Uterus (tissue), 4 donors: ENCODE measurements at regions of chr1 and their contacts with region 1.

Region 1: DNA sequence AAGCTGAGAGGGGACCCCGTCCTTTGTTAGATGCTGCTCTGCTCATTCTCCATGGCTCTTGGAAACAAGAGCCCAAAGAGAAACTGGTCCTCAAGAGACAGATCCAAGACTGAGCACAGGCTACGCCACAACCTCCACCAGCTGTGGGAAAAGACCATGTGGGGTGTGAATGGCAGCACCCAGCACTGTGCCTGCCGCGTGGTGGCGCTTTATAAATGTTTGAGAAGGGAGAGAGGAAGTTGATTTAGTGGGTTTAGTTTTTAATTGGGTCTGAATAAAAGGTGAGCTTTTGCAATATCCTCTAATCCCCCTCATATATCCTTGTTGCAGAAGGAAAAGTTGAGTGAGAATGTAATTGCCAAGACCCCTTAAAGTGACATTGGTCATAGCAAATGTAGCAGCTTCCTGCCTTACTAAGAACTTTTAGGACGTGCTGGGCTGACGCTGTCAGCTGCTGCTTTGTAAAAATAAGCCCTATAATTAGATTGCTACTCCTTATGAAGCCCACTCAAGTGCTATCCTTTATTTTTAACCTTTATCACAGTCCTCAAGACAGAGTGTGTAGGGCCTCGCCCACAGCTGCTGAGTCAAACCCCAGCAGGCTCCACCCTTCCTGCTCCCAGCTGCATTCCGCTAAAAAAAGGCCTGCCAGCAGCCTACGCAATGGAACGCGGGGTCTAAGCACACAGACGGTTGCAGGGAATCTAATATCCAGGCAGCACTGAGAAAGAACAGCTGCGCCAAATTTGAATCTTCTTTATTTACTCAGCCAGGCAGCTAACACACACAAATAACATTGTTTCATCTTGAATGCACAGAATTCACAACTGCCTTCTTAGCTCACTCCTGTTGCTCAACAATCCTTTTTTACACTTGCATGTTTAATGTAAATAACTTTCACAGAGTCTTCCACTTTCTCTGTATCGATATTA is 47.4 kb upstream of the PRDX6 start:
- DNase-seq: peak; percentile 89 to 92
- H3K4me3 ChIP-seq: peak overlapping the region; percentile 8 to 9
- H3K27ac ChIP-seq: peak overlapping the region; percentile 81 to 86
- H3K4me1 ChIP-seq: peaks cover 0 to 7% of the 10 kb centered on the region in 2 donors
- H3K27me3 ChIP-seq: no peaks in the 10 kb centered on the region
- CTCF ChIP-seq: peak; percentile 39 to 52 (median 48)
- POLR2A ChIP-seq: no peak

Region 2: DNA sequence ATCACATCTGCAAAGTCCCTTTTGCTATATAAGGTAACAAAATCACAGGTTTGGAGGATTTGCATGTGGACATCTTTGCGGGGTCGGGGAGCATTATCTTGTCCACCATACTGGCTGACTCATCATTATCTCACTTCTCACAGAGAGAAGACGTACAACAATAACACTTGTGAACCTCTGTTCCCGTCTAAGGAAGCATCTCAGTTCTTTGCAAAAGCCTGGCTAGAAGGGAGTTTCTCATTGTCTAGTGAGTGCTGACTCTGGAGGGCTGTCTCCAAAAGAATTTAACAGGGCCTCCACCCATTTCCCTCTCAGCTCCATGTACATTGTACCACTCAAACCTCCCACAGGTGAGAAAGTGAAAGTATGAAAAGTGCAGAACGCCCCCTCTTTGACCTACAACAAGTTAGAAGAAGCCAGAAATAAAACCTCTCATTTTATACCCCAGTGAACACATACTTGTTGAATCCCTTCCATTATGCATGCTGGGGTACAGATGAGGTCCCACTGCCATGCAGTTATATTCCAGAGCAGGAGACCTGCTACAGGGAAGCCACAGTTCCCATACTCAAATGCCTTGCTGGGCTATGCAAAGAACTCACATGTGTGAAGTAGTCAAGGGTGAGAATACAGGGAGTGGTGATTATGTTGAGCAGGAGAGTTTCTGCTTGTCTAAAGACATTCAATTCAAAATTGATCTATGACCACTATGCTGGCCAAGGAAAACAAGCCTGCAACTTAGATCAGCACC is 74.3 kb before region 1 on chr1:
- intact Hi-C with region 1: no loop called
- DNase-seq: no peak
- H3K4me3 ChIP-seq: no peak overlapping the region
- H3K27ac ChIP-seq: no peak overlapping the region
- H3K4me1 ChIP-seq: no peaks in the 10 kb centered on the region
- H3K27me3 ChIP-seq: no peaks in the 10 kb centered on the region
- CTCF ChIP-seq: no peak
- POLR2A ChIP-seq: no peak

Region 3: GRCh38 chr1:173824331-173825081 is 394.8 kb after region 1 on chr1 and contains the starts of genes CENPL and DARS2:
- intact Hi-C with region 1: loop called (anchors 10 kb)
- DNase-seq: peak; percentile 95 to 97
- H3K4me3 ChIP-seq: peak within 1 kb of the TSS; percentile 77 to 81
- H3K27ac ChIP-seq: peak within 1 kb of the TSS; percentile 95 to 98
- H3K4me1 ChIP-seq: no peaks in the 10 kb centered on the region
- H3K27me3 ChIP-seq: no peaks in the 10 kb centered on the region
- CTCF ChIP-seq: peak in 1 of 4 experiments; percentile 15
- POLR2A ChIP-seq: peak in 1 of 2 donors; percentile 38
- total RNA-seq, gene CENPL: 0.51 to 24.2 (median 4.7) TPM in 3 of 4 donors, not detected in the other
- total RNA-seq, gene DARS2: 4.1 to 20.0 (median 12.7) TPM